B cell (primary cell): ENCODE measurements at regions of chr17 and their contacts with region 1.

Region 1: GRCh38 chr17:48093341-48094045 is 7.8 kb downstream of the CBX1 start:
- DNase-seq: no peak
- ATAC-seq: no peak
- H3K4me3 ChIP-seq: no peak overlapping the region
- H3K4me3 Mint-ChIP-seq: no peak overlapping the region
- H3K27ac ChIP-seq: no peak overlapping the region
- H3K27ac Mint-ChIP-seq: no peak overlapping the region
- H3K4me1 ChIP-seq: peaks cover 0 to 4% of the 10 kb centered on the region in 2 donors
- H3K4me1 Mint-ChIP-seq: peaks cover 13% of the 10 kb centered on the region
- H3K27me3 ChIP-seq: no peaks in the 10 kb centered on the region
- H3K27me3 Mint-ChIP-seq: no peaks in the 10 kb centered on the region
- CTCF ChIP-seq: no peak

Region 2: DNA sequence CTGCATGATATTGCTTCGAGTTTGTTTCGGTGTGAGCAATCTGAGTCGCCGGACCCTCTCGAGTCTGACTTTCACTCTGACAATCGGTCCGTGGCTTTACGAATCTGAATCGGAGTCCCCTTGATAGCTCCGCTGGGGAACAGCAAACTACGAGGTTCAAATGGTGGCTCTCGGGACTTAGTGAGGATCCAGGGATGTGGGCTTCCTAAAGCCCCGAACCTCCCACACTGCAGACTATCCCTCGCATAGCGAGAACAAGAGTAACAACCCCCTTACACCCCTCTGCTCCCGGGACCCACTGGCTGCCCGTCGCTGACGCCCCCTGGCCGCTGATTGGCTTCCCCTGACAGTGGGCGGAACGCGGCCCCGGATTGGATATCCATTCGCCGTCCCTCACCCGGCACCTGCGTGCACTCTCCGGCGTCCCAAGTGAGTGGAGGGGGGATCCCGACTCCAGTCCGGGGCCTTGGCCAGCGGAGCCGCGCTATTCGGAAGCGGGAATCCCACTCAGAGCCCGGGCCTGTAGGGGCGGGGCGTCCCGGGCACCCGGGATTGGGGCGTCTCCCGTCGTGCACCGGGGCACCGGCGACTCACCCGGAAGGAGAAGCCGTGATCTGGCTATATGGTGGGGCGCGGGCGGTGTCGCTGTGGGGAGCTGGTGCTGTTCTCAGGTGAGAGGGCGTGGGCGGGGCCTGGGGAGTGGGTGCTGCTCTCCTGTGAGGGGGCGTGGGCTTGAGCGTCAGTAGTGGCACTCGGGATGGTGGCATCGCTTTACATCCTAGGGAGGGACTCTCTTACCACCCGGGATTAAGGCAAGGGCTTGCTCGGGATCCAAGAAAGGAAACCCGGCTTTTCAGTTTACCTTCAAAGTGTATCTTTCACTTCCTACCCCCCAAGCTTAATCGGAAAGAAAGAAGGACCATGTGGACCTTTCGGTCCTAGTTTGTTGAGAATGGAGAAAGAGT is 14.0 kb after region 1 on chr17 and contains the start of gene SNX11:
- CTCF ChIA-PET with region 1: interaction called, 33 read pairs
- POLR2A ChIA-PET with region 1: interaction called, 6 read pairs
- intact Hi-C with region 1: loop called (anchors 1 kb)
- DNase-seq: peak; percentile 94
- ATAC-seq: peak; percentile 78
- H3K4me3 ChIP-seq: peak within 1 kb of the TSS; percentile 71 to 96 (median 79)
- H3K4me3 Mint-ChIP-seq: peak within 1 kb of the TSS; percentile 91
- H3K27ac ChIP-seq: peak within 1 kb of the TSS; percentile 88 to 94
- H3K27ac Mint-ChIP-seq: peak within 1 kb of the TSS; percentile 97
- H3K4me1 ChIP-seq: peaks cover 46 to 61% of the 10 kb centered on the region in 2 donors
- H3K4me1 Mint-ChIP-seq: peaks cover 58% of the 10 kb centered on the region
- H3K27me3 ChIP-seq: no peaks in the 10 kb centered on the region
- H3K27me3 Mint-ChIP-seq: no peaks in the 10 kb centered on the region
- CTCF ChIP-seq: no peak
- total RNA-seq, gene SNX11: 42.0 and 47.1 TPM in 2 replicates

Region 3: GRCh38 chr17:48153691-48154358 is 60.3 kb after region 1 on chr17:
- CTCF ChIA-PET with region 1: no interaction called
- POLR2A ChIA-PET with region 1: no interaction called
- intact Hi-C with region 1: no loop called
- DNase-seq: no peak
- ATAC-seq: no peak
- H3K4me3 ChIP-seq: no peak overlapping the region
- H3K4me3 Mint-ChIP-seq: no peak overlapping the region
- H3K27ac ChIP-seq: no peak overlapping the region
- H3K27ac Mint-ChIP-seq: no peak overlapping the region
- H3K4me1 ChIP-seq: no peaks in the 10 kb centered on the region
- H3K4me1 Mint-ChIP-seq: no peaks in the 10 kb centered on the region
- H3K27me3 ChIP-seq: no peaks in the 10 kb centered on the region
- H3K27me3 Mint-ChIP-seq: no peaks in the 10 kb centered on the region
- CTCF ChIP-seq: no peak